ENCODE measurements at regions of chr1 and their contacts with region 1.

Region 1: DNA sequence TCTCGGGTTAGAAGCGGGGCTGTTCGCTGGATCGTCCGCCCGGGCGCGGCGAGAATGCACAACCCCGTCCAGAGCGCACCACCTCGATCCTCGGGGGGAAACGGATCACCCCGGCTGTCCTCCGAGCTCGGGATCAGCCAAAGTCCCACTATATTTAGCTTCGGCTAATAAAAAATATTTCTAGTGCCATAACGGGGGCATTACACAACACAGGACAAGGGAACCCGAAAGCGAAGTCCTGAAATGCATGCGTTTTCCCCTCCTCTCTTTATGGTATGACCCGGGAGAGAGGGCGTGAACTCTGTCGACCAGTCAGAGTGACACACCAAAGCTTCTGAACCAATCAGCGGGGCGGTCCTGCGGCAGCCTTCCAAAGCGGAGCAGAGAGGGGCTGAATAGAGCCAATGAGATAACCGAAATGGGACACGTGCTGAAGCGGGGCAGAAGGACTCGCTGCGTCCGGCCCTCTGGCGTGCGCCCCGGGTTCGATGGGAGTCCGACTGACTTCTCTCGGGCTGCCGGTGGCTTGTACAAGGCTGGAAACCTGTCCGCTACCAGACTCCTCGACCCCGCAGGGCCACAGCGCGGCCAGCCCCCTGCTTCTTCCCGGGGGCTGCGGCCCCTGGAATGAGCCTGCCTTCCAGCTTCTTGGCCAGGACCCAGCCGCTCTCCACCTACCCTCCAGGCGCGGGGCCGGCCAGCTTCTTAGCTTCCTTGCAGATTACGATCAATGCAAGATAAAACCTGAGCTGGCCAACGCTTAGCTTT is at the start of gene ALDH4A1:
- DNase-seq: peak; percentile 99
- H3K4me3 ChIP-seq: peak within 1 kb of the TSS; percentile 86
- H3K27ac ChIP-seq: peak within 1 kb of the TSS; percentile 83
- H3K4me1 ChIP-seq: peaks cover 10% of the 10 kb centered on the region
- H3K27me3 ChIP-seq: no peaks in the 10 kb centered on the region
- total RNA-seq, gene ALDH4A1: 13.3 and 26.4 TPM in 2 replicates

Region 2: DNA sequence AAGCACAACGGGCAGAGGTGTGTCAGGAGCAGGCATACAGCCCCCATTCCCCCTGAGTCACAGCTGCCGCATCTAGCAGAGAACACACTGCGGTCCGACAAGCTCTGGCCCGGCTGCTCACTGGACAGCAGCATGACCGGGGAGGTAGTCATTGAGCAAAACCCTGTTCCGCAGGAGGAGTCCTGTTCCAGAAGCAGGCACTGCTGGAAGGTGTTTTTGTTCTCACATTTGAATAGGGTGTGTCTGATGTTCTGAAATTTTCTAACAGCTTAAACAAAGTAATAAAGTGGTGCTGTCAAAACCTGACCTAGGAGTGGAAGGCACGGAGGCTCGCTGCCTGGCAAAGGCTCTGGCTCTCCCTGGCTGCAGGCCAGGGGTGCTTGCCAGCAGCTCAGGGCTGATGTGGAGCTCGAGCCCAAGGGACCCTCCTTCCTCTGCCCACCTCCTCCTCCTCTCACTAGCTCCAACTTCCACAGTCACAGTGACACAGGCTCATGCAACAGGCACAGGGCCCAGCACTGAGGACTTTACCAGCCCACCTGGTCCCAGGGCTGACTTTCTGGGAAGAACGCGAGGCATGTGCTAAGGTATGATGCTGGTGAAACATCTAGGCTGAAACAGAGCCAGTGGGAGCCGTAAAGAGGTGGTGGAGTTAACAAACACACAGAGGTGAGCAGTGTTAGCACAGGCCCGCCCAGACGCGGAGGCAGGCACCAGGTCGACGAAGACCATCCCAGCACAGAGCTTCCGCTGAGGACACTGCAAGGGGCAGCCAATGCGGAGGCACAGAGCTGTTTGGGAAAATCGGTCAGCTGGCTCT is 172.4 kb after region 1 on chr1:
- in situ Hi-C with region 1: loop called (anchors 10 kb)
- DNase-seq: no peak
- H3K4me3 ChIP-seq: no peak overlapping the region
- H3K27ac ChIP-seq: no peak overlapping the region
- H3K4me1 ChIP-seq: no peaks in the 10 kb centered on the region
- H3K27me3 ChIP-seq: no peaks in the 10 kb centered on the region

Region 3: DNA sequence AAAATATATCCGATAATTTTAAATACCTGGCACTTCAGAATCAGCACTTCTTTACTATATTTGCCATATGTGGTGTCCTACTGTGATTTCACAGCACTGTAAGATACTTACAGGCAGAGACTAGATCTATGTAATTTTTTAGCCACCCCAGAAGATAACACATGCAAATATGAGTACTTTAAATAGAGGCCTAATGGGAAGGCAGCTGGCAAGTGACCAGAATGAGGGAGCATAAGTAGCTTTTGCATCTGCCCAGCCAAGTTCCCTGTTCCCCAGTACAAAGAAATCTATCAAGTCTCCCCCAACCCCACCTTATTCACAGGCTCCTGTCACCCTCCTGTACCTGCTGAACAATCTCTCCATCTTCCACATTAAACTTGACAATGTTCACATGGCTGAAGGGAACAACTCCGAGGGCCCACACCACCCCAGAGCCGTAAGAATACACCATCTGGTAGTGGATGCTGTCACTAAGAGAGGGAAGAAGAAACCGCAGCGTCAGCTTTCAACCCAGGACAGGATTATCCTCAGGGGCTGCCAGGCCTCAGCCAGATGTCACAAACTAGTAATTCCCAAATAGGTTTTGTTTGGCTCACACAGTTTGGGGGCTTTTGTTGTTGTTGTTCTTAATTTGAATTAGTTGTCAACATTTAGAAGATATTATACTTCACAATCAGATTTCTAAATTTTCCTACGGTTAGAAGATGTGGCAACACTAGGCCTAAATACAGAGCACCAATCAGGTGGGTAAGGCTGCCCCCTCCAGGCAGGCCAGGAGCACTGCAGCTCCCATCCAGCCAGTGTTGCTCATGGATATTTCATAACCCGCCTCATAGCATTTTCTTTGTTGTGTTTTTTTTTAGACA is 338.2 kb after region 1 on chr1:
- in situ Hi-C with region 1: no loop called
- DNase-seq: peak; percentile 86
- H3K4me3 ChIP-seq: no peak overlapping the region
- H3K27ac ChIP-seq: peak overlapping the region; percentile 61
- H3K4me1 ChIP-seq: no peaks in the 10 kb centered on the region
- H3K27me3 ChIP-seq: no peaks in the 10 kb centered on the region

Measured in GM23248 (cell line).